ENCODE measurements at regions of chr14 and their contacts with region 1.

Region 1: GRCh38 chr14:64387694-64388532 is at the start of gene MTHFD1:
- DNase-seq: peak; percentile 96
- H3K4me3 ChIP-seq: peak within 1 kb of the TSS; percentile 85
- CTCF ChIP-seq: no peak

Region 2: DNA sequence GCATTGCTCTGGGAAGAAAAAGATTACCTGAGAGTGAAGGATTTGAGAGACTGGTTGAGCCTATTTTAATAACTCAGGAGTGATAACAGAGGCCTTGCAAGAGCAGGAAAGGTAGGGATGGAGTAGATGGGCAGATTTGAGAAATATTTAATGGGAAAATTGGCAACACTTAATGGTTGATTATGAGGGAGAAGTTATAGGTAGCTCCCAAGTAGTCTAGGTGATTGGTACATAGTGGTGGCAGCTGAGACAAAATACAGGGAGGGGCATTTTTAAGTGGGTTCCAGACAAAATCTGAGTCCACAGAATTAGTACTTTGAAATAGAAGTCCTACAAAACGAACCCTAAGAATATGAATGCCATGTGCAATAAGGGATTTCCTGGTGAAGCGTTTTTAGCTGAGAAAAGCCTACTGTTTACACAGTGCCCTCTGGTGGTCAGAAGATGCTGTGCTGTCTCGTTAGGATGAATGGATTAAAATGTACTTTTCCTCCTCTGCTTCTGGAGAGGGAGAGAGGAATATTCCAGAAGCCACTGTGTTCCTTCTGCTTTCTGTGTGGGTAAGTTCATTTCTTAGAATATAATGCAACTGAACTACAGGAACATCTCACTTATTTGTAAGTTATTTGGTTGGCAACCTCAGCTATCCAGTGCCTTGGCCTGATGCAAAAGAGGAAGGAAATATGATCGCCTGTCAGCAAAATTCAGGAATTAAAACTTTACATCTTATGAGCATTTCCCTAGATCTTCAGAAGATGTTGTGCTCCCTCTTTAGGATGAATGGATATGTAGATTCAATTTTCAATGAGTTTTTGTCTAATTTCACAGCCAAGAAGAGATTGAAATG is 123.1 kb after region 1 on chr14:
- CTCF ChIA-PET with region 1: interaction called, 10 read pairs
- POLR2A ChIA-PET with region 1: no interaction called
- DNase-seq: no peak
- H3K4me3 ChIP-seq: no peak overlapping the region
- CTCF ChIP-seq: peak; percentile 78